Psoas muscle (tissue), 8 donors: ENCODE measurements at regions of chr3 and their contacts with region 1.

Region 1: GRCh38 chr3:132615881-132616280 is 18.8 kb downstream of the ACKR4 start:
- DNase-seq: no peak
- ATAC-seq: no peak
- H3K4me3 ChIP-seq: no peak overlapping the region
- H3K27ac ChIP-seq: no peak overlapping the region
- H3K4me1 ChIP-seq: no peaks in the 10 kb centered on the region
- H3K27me3 ChIP-seq: no peaks in the 10 kb centered on the region
- CTCF ChIP-seq: no peak

Region 2: GRCh38 chr3:132245552-132246142 is 370.2 kb before region 1 on chr3:
- intact Hi-C with region 1: loop called in 1 of 2 experiments (anchors 5 kb)
- DNase-seq: no peak
- ATAC-seq: no peak
- H3K4me3 ChIP-seq: no peak overlapping the region
- H3K27ac ChIP-seq: no peak overlapping the region
- H3K4me1 ChIP-seq: no peaks in the 10 kb centered on the region
- H3K27me3 ChIP-seq: no peaks in the 10 kb centered on the region
- CTCF ChIP-seq: no peak

Region 3: GRCh38 chr3:133475245-133476010 is 859.5 kb after region 1 on chr3:
- intact Hi-C with region 1: no loop called
- DNase-seq: no peak
- ATAC-seq: no peak
- H3K4me3 ChIP-seq: no peak overlapping the region
- H3K27ac ChIP-seq: no peak overlapping the region
- H3K4me1 ChIP-seq: peaks cover 4% of the 10 kb centered on the region
- H3K27me3 ChIP-seq: no peaks in the 10 kb centered on the region
- CTCF ChIP-seq: no peak